ENCODE measurements at regions of chr15 and their contacts with region 1.

Region 1: DNA sequence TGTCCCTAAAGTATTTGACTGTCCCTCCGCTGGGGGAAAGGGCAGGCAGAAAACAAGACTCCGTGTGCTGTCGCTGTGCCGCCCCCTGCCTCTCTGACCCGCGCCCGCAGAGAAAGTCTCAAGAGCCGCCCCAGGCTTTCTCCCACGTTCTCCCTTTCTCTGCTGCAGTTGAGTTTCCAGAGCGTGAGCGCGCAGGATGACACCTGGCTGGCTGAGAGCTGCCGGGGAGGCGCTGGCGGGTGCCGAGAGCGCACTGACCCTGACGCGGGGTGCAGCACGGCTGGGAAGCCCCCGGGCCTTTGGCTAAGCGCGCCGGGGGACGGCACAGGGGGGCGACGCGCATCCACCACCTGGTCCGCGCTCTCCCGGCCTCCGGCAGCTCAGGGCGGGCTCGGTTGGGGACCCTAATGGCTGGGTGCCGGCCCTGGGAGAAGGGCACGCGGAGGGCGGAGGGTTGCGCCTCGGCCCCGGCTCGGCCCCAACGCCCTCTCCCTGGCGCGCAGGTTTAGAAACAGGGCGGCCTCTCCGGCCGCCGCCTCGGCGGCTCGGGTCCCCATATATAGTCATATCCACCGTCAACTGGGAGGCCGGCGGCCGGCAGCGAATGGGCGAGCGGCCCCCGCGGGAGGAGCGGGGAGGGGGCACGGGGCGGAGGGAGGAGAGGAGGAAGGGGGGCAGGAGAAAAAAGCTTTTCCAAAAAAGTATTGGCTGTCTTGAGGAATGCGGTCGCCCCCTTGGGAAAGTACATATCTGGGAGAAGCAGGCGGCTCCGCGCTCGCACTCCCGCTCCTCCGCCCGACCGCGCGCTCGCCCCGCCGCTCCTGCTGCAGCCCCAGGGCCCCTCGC is at the start of gene TPM1:
- DNase-seq: peak; percentile 87
- ATAC-seq: peak; percentile 82 to 87
- total RNA-seq, gene TPM1: 8,049 to 9,104 TPM

Region 2: GRCh38 chr15:62896978-62897647 is 145.1 kb before region 1 on chr15:
- intact Hi-C with region 1: loop called in 1 of 2 experiments (anchors 5 kb)
- DNase-seq: peak; percentile 92
- ATAC-seq: peak; percentile 88 to 90

Region 3: GRCh38 chr15:63122002-63122893 is 80.1 kb after region 1 on chr15:
- intact Hi-C with region 1: no loop called
- DNase-seq: peak; percentile 85
- ATAC-seq: peak; percentile 98 to 99

Region 4: GRCh38 chr15:63172376-63173109 is 130.3 kb after region 1 on chr15:
- intact Hi-C with region 1: no loop called
- DNase-seq: no peak
- ATAC-seq: no peak